Gastrocnemius medialis (tissue), 4 donors: ENCODE measurements at regions of chr20 and their contacts with region 1.

Region 1: DNA sequence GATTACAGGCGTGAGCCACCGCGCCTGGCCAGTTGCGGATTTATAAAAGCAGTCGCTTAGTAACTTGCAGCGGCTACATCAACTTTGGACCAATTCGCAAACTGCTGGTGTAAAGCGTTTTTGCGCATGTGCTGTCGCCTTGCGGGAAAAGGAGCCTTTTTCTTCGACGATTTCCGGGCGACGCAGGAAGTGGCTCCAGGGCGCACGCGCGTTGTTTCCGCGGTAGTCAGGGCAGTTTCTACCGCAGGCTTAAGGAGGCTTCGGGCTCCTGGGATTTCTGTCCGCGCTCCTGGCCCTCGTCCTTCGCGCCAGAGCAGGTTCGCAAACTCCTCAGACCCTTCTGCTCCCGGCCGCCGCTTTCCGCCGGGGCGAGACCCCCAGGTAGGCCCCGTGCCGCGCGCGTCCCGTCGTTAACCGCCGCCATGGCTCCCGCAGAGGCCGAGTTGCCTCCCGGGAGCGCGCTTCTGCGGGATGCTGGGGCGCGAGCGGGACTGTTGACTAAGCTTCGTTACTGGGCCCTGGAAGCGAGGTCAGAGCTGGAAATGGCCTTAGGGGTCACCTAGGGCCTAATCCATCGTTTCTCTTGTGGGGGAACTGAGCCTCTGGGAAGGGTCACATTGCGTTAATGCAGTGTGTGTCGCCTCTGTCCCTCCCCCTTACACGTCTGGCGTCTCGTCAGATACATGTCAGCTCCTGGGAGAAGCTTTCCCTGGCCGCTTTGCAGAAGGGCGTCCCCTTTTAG is at the start of gene RAE1:
- DNase-seq: peak; percentile 83
- ATAC-seq: peak; percentile 94 to 97
- H3K4me3 ChIP-seq: peak within 1 kb of the TSS; percentile 85 to 97 (median 94)
- H3K27ac ChIP-seq: peak within 1 kb of the TSS; percentile 82 to 85 (median 84)
- H3K4me1 ChIP-seq: peaks cover 6 to 9% of the 10 kb centered on the region in 2 donors
- H3K27me3 ChIP-seq: no peaks in the 10 kb centered on the region
- CTCF ChIP-seq: no peak
- POLR2A ChIP-seq: peak; percentile 40 to 64
- total RNA-seq, gene RAE1: 15.8 to 35.8 (median 20.6) TPM

Region 2: DNA sequence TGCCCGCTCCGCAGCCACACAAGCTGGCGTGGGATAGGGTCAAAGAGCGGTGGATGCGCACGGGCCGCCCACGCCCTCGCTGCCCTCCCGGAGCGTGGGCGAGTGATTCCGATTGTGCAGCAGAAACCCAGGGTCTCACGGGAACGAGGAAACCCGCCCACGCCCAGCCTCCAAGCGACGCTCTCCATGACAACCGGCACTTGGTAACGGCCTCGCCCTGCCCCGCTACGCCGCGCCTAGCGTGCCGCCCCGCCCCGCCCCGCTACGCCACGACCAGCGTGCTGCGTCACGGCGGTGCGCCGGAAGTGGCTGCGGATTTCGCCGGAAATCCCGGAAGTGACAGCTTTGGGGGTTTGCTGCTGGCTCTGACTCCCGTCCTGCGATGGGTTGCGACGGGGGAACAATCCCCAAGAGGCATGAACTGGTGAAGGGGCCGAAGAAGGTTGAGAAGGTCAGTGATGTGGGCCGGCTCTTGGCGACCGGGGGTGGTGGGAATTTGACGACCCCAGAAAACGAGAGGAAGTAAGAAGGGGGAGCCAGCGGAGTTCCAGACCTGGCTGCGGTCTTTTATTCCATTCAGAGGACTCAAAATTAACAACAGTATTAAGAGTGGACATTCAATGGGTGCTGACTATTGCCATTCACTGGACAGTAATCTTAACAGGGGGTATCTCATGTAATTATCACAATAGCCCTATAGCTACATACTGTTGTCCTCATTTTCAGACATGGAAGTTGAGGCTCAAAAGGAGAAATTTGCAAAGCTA is 882.7 kb before region 1 on chr20 and contains the start of gene RTF2:
- in situ Hi-C with region 1: no loop called
- intact Hi-C with region 1: loop called (anchors 5 kb)
- DNase-seq: peak; percentile 78 to 84
- ATAC-seq: peak; percentile 95 to 97
- H3K4me3 ChIP-seq: peak within 1 kb of the TSS; percentile 73 to 93 (median 92)
- H3K27ac ChIP-seq: peak within 1 kb of the TSS; percentile 79 to 87 (median 86)
- H3K4me1 ChIP-seq: peaks cover 27% of the 10 kb centered on the region in 2 donors
- H3K27me3 ChIP-seq: no peaks in the 10 kb centered on the region
- CTCF ChIP-seq: peak in 1 of 5 experiments; percentile 7
- POLR2A ChIP-seq: peak; percentile 31 to 49
- total RNA-seq, gene RTF2: 69.1 to 88.8 (median 77.5) TPM

Region 3: DNA sequence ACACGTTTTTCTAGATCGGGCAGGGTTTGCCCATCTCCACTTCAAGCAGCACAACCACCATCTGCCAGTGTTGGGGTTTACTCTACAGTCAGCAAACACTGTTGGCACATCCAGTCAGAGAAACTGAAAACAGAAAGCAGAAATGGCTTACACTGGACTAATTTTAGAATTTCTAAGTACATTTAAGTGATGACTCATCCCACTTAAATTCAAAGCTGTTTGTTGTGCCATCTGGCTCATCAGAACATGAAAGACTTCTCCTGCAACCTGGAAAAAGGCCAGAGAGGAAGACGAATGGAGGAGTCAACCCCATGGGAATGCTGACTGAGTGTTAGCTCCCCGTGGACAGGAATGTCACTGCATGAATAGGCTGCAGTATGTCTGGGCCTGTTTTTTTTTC is 796.3 kb before region 1 on chr20:
- in situ Hi-C with region 1: loop called in 2 of 4 experiments (anchors 25 kb)
- intact Hi-C with region 1: no loop called
- DNase-seq: peak; percentile 15 to 23
- ATAC-seq: peak; percentile 42 to 56
- H3K4me3 ChIP-seq: no peak overlapping the region
- H3K27ac ChIP-seq: no peak overlapping the region
- H3K4me1 ChIP-seq: peaks cover 6 to 10% of the 10 kb centered on the region in 2 donors
- H3K27me3 ChIP-seq: no peaks in the 10 kb centered on the region
- CTCF ChIP-seq: no peak
- POLR2A ChIP-seq: no peak

Region 4: DNA sequence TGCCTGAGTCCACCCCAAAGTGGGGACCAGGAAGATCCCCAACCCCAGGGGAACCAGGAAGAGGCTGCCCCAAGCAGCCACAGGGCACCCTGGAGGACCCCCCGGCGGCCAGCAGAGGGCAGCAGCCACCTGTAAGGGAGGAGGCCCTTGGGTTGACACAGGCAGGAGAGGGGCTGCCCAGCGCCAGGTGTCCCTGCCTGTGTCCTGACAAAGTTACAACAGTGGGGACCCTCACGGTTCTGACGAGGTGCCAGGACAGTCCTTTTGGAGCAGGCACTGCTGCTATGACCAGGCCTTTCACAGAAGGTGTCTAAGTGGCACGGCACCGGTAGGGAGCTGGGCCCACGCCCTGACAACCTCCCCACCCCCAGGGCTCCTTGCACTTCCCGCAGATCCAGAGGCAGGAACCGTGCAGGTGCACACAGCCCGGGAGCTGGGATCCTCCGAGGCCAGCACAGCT is 261.5 kb before region 1 on chr20:
- in situ Hi-C with region 1: loop called (anchors 10 to 25 kb)
- intact Hi-C with region 1: loop called (anchors 1 kb)
- DNase-seq: no peak
- ATAC-seq: no peak
- H3K4me3 ChIP-seq: no peak overlapping the region
- H3K27ac ChIP-seq: no peak overlapping the region
- H3K4me1 ChIP-seq: no peaks in the 10 kb centered on the region
- H3K27me3 ChIP-seq: no peaks in the 10 kb centered on the region
- CTCF ChIP-seq: peak; percentile 20 to 68 (median 62)
- POLR2A ChIP-seq: no peak

Region 5: DNA sequence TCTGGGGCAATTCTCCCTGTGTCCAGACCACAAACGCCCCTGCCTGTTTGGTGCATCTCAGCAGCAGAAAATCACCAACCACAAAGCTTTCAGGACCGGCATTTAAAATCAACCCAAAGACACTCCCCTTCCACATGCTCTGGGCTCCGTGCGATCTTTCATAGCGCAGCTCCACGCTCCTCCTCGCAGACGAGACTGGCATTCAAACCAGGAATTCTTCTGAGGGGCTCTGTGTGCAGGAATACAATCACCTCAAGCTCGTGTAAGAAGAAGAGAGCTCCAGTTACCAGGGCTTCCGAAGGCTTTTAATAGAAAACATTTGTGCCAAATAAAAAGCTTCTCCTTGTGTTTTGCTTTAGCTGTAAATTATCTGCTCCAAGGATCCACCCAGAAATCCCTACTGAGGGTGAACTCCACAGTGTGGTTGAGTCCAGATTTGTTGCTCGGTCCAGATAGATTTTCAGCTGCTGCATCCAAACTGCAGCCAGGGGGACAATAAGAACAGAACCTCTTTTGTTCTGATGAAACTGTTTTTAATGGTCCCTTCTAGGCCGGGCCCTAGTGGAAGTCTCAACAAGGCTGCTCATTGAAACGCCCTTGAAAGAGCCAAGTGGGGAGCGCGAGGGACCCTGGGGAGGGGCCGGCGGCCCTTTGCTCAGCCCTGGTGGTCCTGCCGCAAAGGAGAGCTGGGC is 68.4 kb before region 1 on chr20:
- in situ Hi-C with region 1: no loop called
- intact Hi-C with region 1: no loop called
- DNase-seq: no peak
- ATAC-seq: no peak
- H3K4me3 ChIP-seq: no peak overlapping the region
- H3K27ac ChIP-seq: no peak overlapping the region
- H3K4me1 ChIP-seq: no peaks in the 10 kb centered on the region
- H3K27me3 ChIP-seq: peaks cover 0 to 16% (median 0%) of the 10 kb centered on the region in 3 donors
- CTCF ChIP-seq: no peak
- POLR2A ChIP-seq: no peak

Region 6: GRCh38 chr20:57628047-57628961 is 277.1 kb after region 1 on chr20:
- in situ Hi-C with region 1: no loop called
- intact Hi-C with region 1: no loop called
- DNase-seq: peak; percentile 25 to 33
- ATAC-seq: peak; percentile 49 to 63
- H3K4me3 ChIP-seq: peak overlapping the region in 1 of 4 donors; percentile 4
- H3K27ac ChIP-seq: peak overlapping the region; percentile 52 to 77 (median 64)
- H3K4me1 ChIP-seq: peaks cover 0 to 4% of the 10 kb centered on the region in 2 donors
- H3K27me3 ChIP-seq: peaks cover 0 to 6% (median 0%) of the 10 kb centered on the region in 3 donors
- CTCF ChIP-seq: no peak
- POLR2A ChIP-seq: no peak

Region 7: GRCh38 chr20:58209652-58210397 is 858.6 kb after region 1 on chr20:
- in situ Hi-C with region 1: loop called in 2 of 4 experiments (anchors 25 kb)
- intact Hi-C with region 1: no loop called
- DNase-seq: peak; percentile 46 to 58
- ATAC-seq: peak; percentile 47 to 80
- H3K4me3 ChIP-seq: no peak overlapping the region
- H3K27ac ChIP-seq: no peak overlapping the region
- H3K4me1 ChIP-seq: no peaks in the 10 kb centered on the region
- H3K27me3 ChIP-seq: peaks cover 0 to 7% (median 3%) of the 10 kb centered on the region in 3 donors
- CTCF ChIP-seq: peak; percentile 99 to 100 (median 100)
- POLR2A ChIP-seq: no peak

Region 8: DNA sequence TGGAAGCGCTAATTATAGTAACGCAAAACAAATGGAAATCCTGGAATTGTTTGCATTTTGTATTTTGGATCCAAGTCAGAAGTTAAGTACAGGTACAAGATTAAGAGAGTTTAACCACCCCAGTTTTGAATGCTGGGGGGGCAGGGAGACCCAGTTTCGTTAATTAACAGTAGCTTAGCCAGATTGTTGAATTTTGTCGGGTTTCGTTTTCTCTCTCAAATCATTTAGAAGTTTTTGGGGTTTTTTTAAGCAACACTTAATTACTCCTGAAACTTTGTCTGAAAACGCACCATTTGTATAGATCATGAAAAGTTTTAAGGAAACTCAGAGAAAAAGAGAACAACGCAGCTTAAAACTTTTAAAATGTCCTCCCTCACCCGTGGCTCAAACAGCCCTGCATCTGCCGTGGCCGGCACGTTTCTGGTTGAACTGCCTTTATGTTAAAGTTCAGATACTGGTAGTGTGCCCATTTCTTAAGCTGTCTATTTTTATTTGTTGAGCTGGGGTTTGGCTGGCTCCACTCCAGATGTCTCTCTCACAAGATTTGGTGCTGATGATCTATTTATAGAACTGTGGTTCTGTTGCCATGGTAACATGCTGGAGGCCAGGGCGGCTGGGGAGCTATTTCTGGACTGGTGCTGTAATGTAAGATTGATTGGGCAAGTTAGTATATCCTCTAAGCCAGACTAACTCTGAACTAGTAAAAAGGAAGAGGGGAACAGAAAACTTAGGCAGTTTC is 1556.4 kb after region 1 on chr20:
- in situ Hi-C with region 1: no loop called
- intact Hi-C with region 1: loop called (anchors 10 kb)
- DNase-seq: peak; percentile 96 to 98
- ATAC-seq: peak; percentile 95 to 96
- H3K4me3 ChIP-seq: peak overlapping the region; percentile 32 to 40 (median 34)
- H3K27ac ChIP-seq: peak overlapping the region; percentile 84 to 99 (median 96)
- H3K4me1 ChIP-seq: peaks cover 30 to 54% of the 10 kb centered on the region in 2 donors
- H3K27me3 ChIP-seq: no peaks in the 10 kb centered on the region
- CTCF ChIP-seq: no peak
- POLR2A ChIP-seq: peak; percentile 56 to 77